Transverse colon (tissue), 4 donors: ENCODE measurements at regions of chr13 and their contacts with region 1.

Region 1: GRCh38 chr13:54424344-54424743 is 1395.7 kb downstream of the OLFM4 start:
- DNase-seq: no peak
- H3K4me3 ChIP-seq: no peak overlapping the region
- H3K27ac ChIP-seq: no peak overlapping the region
- H3K4me1 ChIP-seq: no peaks in the 10 kb centered on the region
- H3K27me3 ChIP-seq: no peaks in the 10 kb centered on the region
- CTCF ChIP-seq: no peak
- EP300 ChIP-seq: no peak
- POLR2A ChIP-seq: no peak

Region 2: GRCh38 chr13:54194233-54195024 is 229.9 kb before region 1 on chr13:
- in situ Hi-C with region 1: no loop called
- intact Hi-C with region 1: no loop called
- DNase-seq: no peak
- H3K4me3 ChIP-seq: no peak overlapping the region
- H3K27ac ChIP-seq: no peak overlapping the region
- H3K4me1 ChIP-seq: no peaks in the 10 kb centered on the region
- H3K27me3 ChIP-seq: no peaks in the 10 kb centered on the region
- CTCF ChIP-seq: no peak
- EP300 ChIP-seq: no peak
- POLR2A ChIP-seq: no peak

Region 3: DNA sequence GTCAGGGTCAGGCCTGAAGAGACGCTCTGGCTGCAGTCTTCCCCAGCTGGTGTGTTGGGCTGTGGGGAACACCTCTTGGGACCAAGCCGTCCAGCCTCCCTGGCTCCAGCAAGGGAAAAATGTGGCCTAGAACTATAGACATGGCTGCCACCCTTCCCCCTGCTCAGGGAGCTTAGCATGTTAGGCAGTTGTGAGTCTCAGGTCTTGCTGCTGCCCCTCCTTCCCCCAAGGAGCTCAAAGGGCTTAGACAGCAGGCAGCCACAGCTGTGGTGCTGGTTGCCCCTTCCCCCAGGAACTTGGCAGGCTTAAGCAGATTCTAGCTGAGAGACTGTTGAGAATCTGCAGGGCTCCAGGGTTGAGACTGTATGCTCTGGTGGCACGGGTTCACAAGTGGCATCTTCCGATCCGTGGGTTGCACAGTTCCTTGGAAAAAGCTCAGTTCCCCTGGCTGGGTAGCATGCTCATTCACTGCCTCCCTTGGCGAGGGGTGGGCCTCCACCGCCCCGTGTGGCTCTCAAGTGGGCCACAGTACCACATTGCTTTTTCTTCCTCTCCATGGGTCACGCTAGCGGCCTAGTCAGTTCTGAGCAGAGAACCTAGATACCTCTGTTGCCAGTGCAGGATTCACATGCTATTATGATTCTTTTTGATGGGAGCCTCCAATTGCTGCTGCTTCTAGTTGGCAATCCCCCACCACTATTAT is 137.1 kb before region 1 on chr13:
- in situ Hi-C with region 1: no loop called
- intact Hi-C with region 1: loop called (anchors 5 kb)
- DNase-seq: no peak
- H3K4me3 ChIP-seq: no peak overlapping the region
- H3K27ac ChIP-seq: no peak overlapping the region
- H3K4me1 ChIP-seq: no peaks in the 10 kb centered on the region
- H3K27me3 ChIP-seq: no peaks in the 10 kb centered on the region
- CTCF ChIP-seq: no peak
- EP300 ChIP-seq: no peak
- POLR2A ChIP-seq: no peak

Region 4: GRCh38 chr13:54733639-54734038 is 309.3 kb after region 1 on chr13:
- in situ Hi-C with region 1: no loop called
- intact Hi-C with region 1: no loop called
- DNase-seq: no peak
- H3K4me3 ChIP-seq: no peak overlapping the region
- H3K27ac ChIP-seq: no peak overlapping the region
- H3K4me1 ChIP-seq: no peaks in the 10 kb centered on the region
- H3K27me3 ChIP-seq: no peaks in the 10 kb centered on the region
- CTCF ChIP-seq: no peak
- EP300 ChIP-seq: no peak
- POLR2A ChIP-seq: no peak